ENCODE measurements at regions of chr1 and their contacts with region 1.

Region 1: DNA sequence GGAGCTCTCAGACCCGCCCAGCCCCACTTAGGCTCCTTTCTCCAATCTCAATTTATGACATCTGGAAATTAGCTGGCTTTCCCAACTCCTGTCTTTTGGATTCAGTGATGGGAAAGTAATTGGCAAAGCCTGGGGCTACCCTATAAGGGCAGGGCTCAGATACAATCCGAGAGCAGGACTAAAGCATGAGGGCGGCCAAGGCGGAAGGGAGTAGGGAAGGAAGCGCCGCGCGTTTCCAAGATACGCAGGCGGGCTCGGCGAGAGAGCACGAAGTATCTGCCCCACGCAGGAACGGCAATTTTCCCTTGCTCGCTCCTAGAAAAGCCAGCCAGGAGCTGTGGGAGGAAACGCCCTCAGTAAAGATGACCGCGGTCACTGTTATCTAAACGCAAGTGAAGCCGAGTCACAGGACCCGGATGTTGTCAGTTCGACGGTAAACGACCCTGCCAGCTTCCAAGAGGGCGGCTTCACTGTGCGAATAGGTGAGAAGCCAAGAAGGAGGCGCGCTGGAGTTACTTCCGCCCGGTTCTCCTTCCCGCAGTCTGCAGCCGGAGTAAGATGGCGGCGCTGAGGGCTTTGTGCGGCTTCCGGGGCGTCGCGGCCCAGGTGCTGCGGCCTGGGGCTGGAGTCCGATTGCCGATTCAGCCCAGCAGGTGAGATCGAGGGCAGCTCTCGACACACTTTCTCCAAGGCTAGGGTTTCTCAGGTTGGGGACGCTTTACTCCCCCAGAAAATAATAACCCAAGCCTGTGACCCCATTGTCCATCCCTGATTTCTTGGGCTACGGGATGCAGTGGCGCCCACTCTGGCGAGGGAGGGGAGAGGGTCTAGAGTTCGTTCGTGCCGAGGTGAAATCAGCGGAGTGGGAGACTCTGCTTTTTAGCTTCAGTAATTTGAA is at the start of gene NDUFS2:
- DNase-seq: peak; percentile 99
- total RNA-seq, gene NDUFS2: 253 TPM

Region 2: DNA sequence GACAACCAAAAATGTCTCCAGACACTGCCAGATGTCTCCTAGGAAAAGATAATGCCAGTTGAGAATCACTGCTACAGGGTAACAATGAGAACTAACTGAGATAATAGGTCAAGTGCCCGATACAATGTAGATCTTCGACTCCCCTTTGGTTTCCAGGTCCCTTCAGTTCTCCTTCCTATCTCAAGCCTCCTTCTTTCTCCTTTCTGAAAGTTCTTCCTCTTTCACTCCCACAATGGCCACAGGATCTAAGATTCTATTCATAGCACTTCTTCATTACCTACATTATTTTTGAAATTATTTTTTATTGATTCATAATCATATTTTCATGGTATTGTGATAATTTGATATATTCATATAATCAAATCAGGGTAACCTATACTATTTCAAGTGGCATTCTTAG is 90.5 kb before region 1 on chr1:
- intact Hi-C with region 1: no loop called
- DNase-seq: no peak

Region 3: DNA sequence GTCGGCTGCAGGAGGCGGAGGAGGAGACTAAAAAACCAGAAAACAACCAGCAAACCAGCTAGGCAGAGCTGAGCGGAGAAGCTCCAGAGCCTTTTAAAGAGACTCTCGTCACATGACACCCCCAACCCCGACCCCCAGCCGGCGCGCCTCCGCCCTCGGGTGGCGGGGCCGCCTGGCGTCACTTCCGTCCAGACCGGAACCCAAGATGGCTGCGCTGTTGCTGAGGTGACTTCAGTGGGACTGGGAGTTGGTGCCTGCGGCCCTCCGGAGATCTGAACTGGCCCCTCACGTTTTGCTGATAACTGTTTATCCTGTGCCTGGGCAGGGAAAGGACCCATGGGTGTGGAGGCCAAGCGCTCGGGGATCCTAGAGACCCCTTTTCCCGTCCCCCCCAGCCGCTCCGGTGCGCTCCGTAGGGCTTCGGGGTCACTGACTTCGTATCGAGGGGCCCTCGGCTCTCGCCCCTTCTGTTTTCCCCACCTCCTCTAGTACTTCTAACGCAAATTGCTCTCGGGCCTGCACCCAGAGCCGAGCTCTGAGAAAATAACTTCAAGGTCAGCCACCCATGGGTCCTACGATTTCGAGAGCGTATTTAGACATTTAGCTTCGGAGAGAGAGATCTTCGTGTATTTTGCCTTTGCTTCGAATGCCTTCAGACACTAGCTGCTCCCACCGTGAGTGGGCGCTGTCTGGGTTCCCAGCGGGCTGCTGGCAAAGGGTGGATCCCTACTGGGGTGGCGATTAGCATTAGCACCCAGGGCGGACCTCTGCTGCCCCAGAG is 112.3 kb after region 1 on chr1 and contains the start of gene SDHC:
- intact Hi-C with region 1: loop called (anchors 5 kb)
- DNase-seq: peak; percentile 95
- total RNA-seq, gene SDHC: 306 TPM

Region 4: GRCh38 chr1:161389691-161390558 is 187.8 kb after region 1 on chr1:
- intact Hi-C with region 1: loop called (anchors 5 kb)
- DNase-seq: peak; percentile 99

Region 5: DNA sequence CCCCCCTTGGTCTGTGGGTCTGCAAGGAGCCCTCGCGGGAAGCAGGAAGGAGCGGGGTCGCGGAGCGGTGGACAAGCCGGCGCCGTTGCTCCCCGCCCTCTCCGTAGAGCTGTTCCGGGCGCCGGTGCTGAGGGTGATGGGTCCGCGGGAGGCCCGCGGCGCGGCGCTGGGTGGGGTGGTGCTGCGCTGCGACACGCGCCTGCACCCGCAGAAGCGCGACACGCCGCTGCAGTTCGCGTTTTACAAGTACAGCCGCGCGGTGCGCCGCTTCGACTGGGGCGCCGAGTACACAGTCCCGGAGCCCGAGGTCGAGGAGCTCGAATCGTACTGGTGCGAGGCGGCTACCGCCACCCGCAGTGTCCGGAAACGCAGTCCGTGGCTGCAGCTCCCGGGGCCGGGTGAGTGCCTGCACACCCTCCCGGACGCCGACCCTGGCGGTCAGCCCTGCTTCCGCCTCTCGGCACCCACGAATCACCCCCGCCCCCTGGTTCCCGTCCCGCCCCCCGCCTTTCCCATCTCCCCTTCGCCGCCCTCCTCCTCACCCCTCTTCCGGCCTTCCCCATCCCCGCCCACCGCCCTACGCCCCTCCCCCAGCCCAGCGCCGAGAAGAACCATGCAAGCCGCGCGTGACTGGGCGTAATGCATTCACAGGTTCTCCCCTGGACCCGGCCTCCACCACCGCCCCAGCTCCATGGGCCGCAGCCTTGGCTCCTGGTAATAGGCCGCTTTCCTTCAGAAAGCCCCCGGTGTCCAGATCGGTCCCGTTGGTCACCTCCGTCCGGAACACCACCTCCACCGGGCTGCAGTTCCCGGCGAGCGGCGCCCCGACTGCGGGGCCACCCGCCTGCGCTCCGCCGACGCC is 524.8 kb after region 1 on chr1:
- intact Hi-C with region 1: loop called (anchors 5 kb)
- DNase-seq: peak; percentile 90

Measured in cardiac septum (tissue), 1 donor.